Activated CD4-positive, alpha-beta T cell treated with anti-CD3 and anti-CD28 coated beads for 36 hours (primary cell): ENCODE measurements at regions of chr9 and their contacts with region 1.

Region 1: GRCh38 chr9:31119882-31120454 is 1264.5 kb upstream of the ACO1 start:
- DNase-seq: peak; percentile 46
- ATAC-seq: peak; percentile 53
- H3K4me3 Mint-ChIP-seq: no peak overlapping the region
- H3K27ac Mint-ChIP-seq: no peak overlapping the region
- H3K4me1 Mint-ChIP-seq: peaks cover 7% of the 10 kb centered on the region
- H3K27me3 Mint-ChIP-seq: no peaks in the 10 kb centered on the region

Region 2: DNA sequence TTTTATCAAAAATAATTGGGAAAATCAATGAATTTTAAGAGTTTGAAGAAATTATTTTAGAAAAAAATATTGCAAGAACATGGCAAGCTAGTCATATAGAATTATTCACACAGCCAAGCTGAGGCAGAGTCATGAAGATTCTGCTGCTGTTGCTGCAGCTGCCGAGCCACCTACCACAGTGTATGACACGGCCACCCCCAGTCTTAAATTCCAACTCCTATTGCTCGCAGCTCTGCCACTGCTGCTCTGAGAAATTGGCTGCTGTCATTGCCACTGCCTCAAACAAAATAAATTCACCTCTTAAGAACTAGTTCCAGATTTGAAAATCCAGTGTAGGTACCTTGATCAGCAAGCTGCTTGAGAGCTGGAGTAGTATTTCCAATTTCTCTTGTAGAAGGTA is 54.3 kb before region 1 on chr9:
- CTCF ChIA-PET with region 1: no interaction called
- POLR2A ChIA-PET with region 1: no interaction called
- intact Hi-C with region 1: no loop called
- DNase-seq: no peak
- ATAC-seq: no peak
- H3K4me3 Mint-ChIP-seq: no peak overlapping the region
- H3K27ac Mint-ChIP-seq: no peak overlapping the region
- H3K4me1 Mint-ChIP-seq: no peaks in the 10 kb centered on the region
- H3K27me3 Mint-ChIP-seq: no peaks in the 10 kb centered on the region

Region 3: DNA sequence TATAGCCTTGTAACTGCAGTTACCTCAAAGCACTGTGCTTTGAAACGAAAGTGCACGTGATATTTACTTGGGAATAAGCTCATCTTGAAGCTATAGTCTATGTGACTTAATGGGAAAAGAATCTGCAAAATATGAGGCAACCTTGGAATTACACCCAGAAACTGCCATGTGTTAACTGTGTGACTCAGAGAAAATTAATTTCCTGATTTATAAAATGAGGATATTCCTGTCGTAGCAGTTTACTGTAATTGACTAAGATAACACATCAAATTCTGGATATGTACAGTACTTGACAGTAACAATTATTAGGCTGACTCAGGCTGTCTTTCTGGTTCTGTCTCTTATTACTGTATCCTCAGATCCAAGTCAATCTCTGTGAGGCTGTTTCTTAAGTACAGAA is 184.6 kb after region 1 on chr9:
- CTCF ChIA-PET with region 1: no interaction called
- POLR2A ChIA-PET with region 1: no interaction called
- intact Hi-C with region 1: loop called in 1 of 2 experiments (anchors 5 kb)
- DNase-seq: no peak
- ATAC-seq: no peak
- H3K4me3 Mint-ChIP-seq: no peak overlapping the region
- H3K27ac Mint-ChIP-seq: no peak overlapping the region
- H3K4me1 Mint-ChIP-seq: peaks cover 21% of the 10 kb centered on the region
- H3K27me3 Mint-ChIP-seq: no peaks in the 10 kb centered on the region

Region 4: DNA sequence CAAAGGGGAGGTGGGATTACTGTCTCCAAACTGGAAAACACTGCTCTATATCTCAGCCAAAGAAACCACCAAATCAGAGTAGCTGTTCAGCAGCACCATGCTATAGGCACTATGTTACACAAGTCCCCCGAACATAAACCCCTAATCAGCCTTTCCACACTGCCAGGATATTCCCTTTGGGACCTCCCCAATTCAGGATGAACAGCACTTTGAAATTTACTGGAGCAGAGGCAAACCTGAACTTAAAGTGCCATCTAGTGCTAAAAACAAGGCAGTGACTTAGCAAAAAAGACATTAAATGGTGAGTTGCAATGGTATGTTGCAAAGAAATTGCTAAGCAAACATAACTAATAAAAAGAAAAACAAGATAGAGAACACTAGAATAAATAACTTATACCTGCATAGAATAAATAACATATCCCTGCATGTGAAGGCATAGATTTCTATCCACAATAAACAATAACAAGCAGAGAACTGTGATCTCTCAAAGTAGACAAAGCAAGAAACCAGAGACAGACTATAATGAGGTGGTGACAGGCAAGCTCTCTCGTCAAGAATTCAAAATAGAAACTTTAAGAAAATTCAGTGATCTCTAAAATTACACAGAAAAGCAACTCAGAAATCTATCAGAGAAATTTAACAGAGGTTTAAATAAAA is 680.1 kb after region 1 on chr9:
- CTCF ChIA-PET with region 1: interaction called, 3 read pairs
- POLR2A ChIA-PET with region 1: no interaction called
- intact Hi-C with region 1: loop called (anchors 1 kb)
- DNase-seq: no peak
- ATAC-seq: no peak
- H3K4me3 Mint-ChIP-seq: no peak overlapping the region
- H3K27ac Mint-ChIP-seq: no peak overlapping the region
- H3K4me1 Mint-ChIP-seq: peaks cover 9% of the 10 kb centered on the region
- H3K27me3 Mint-ChIP-seq: no peaks in the 10 kb centered on the region